ENCODE measurements at regions of chr2 and their contacts with region 1.

Region 1: DNA sequence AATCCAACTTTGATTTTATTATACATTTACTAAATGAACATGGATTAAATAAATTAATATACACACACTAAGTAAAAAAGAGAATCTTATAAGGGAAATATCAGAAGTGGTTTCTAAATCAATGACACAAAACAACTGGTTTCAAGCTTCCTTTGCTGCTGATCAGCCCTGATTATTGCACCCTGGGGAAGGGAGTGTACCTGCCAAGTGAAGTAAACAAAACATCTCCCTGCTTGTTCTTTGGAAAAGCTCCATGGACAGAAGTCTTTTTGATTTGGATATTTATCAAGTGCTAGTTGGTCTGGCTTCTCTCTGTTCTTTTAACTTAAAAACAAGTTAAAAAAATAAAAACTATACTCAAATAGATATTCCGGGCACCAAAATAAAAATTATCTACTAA is 190.1 kb downstream of the PDE11A start:
- DNase-seq: no peak
- ATAC-seq: peak; percentile 46

Region 2: DNA sequence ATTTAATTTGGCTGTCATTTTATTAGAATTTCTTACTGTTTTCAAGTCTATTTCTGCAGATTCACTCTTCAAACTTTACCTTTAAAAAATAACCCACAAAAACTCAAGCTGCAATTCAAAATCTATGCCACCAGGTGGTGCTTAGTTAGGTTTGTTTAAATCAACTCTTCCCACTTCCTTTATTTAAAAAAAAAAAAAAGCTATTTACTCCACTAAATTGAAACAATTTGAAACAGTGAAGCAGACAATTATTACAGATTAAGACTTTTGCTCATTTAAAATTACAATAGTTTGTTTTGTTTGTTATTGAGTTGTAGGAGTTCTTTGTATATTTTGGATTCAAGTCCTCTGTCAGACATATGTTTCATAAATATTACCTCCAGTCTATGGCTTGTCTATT is 110.0 kb before region 1 on chr2:
- intact Hi-C with region 1: loop called (anchors 5 kb)
- DNase-seq: no peak
- ATAC-seq: no peak

Region 3: GRCh38 chr2:177783835-177784744 is 98.4 kb before region 1 on chr2:
- intact Hi-C with region 1: no loop called
- DNase-seq: no peak
- ATAC-seq: peak; percentile 75

Region 4: DNA sequence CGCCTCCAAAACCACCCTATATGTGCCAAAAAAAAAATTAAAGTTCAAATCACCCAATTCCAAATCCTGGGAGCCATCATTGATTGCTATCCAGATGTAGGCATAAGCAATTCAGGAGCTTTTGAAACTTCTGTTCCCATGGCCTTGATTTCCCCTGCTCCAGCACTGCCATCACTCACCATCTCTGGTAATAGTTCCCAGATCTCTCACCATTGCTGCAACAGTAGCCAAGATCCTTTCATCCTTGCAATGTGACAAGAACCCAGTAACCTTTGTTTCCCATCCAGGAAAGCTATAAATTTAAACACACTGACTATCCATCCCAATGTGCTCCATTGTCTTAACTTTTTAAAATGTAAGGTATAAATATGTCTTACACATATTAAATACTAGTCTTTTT is 34.7 kb after region 1 on chr2:
- intact Hi-C with region 1: loop called (anchors 5 kb)
- DNase-seq: peak; percentile 27
- ATAC-seq: peak; percentile 79

Measured in Right ventricle myocardium inferior (tissue), 1 donor.